ENCODE measurements at regions of chr4 and their contacts with region 1.

Region 1: DNA sequence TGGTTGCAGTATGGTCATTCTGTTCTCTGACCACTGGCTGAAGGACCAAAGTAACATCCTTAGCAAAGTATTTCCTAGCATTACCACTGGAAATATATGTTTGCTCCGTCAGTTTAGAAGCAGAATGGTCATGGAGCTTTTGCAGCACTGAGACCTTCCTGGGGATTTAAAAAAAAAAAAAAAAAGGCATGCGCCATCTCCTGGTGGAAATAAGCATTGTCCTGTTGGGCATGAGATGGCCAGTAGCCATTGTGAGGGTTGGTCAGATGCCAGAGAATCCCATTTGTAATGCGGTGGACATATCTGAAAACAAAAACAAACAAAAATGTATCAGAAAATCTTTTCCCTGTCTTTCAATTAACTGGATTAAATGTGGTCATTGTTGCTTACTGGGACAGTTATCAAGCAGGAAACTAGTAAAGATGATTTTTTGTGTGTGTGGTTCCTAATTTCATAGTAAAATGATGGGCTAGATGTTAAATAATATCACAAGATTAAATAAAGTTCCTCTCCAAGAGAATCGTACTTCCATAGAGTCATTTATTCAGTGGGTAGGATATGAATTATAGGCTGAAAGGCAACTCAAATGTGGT is 139.6 kb downstream of the SOWAHB start:
- DNase-seq: peak in 1 of 2 donors; percentile 35
- ATAC-seq: peak in 7 of 8 donors; percentile 41 to 69 (median 57)
- H3K4me3 ChIP-seq: no peak overlapping the region
- H3K27ac ChIP-seq: peak overlapping the region in 2 of 10 donors; percentile 5 to 60
- H3K4me1 ChIP-seq: peaks cover 0 to 38% (median 20%) of the 10 kb centered on the region in 9 donors
- H3K27me3 ChIP-seq: no peaks in the 10 kb centered on the region
- CTCF ChIP-seq: peak; percentile 55 to 82 (median 77)

Region 2: GRCh38 chr4:76504613-76505465 is 253.5 kb before region 1 on chr4:
- intact Hi-C with region 1: loop called in 8 of 10 experiments (anchors 1 to 10 kb)
- DNase-seq: no peak
- ATAC-seq: peak in 4 of 8 donors; percentile 33 to 63 (median 52)
- H3K4me3 ChIP-seq: no peak overlapping the region
- H3K27ac ChIP-seq: no peak overlapping the region
- H3K4me1 ChIP-seq: no peaks in the 10 kb centered on the region
- H3K27me3 ChIP-seq: peaks cover 0 to 5% (median 0%) of the 10 kb centered on the region in 7 donors
- CTCF ChIP-seq: peak; percentile 32 to 79 (median 71)

Region 3: GRCh38 chr4:76547172-76547742 is 211.1 kb before region 1 on chr4:
- intact Hi-C with region 1: no loop called
- DNase-seq: no peak
- ATAC-seq: no peak
- H3K4me3 ChIP-seq: no peak overlapping the region
- H3K27ac ChIP-seq: peak overlapping the region in 1 of 10 donors; percentile 9
- H3K4me1 ChIP-seq: peaks cover 0 to 13% (median 7%) of the 10 kb centered on the region in 9 donors
- H3K27me3 ChIP-seq: no peaks in the 10 kb centered on the region
- CTCF ChIP-seq: no peak

Region 4: DNA sequence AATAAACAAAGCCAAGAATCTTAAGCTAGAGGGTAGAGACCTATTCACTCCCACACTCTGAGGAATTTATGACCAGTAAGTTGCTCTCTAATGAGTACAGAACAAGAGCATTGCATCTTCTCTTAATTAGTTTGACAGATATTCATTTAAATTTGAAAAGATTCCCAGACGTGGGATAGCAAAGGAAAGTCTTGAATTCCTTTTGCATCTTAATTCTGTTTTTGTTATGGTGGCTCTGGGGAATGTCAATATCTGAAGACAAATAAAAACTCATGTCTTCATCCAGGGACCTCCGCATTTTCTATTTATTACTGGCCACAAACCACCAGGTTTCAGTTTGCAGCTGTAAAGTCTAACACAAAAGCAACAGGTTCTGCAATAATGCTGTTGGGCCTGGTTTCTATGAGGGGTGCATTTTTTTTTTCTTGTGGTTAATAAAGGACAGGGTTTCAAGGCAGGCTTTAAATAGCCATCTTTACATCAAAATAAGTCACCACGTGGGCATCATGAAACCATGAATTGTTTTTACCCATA is 151.1 kb before region 1 on chr4:
- intact Hi-C with region 1: loop called in 1 of 10 experiments (anchors 10 kb)
- DNase-seq: no peak
- ATAC-seq: peak in 1 of 8 donors; percentile 43
- H3K4me3 ChIP-seq: no peak overlapping the region
- H3K27ac ChIP-seq: peak overlapping the region in 1 of 10 donors; percentile 4
- H3K4me1 ChIP-seq: peaks cover 2 to 49% (median 21%) of the 10 kb centered on the region in 9 donors
- H3K27me3 ChIP-seq: no peaks in the 10 kb centered on the region
- CTCF ChIP-seq: no peak

Region 5: GRCh38 chr4:76790377-76790776 is 32.0 kb after region 1 on chr4:
- intact Hi-C with region 1: no loop called
- DNase-seq: no peak
- ATAC-seq: no peak
- H3K4me3 ChIP-seq: no peak overlapping the region
- H3K27ac ChIP-seq: no peak overlapping the region
- H3K4me1 ChIP-seq: no peaks in the 10 kb centered on the region
- H3K27me3 ChIP-seq: no peaks in the 10 kb centered on the region
- CTCF ChIP-seq: no peak

Region 6: GRCh38 chr4:77193511-77194102 is 435.2 kb after region 1 on chr4:
- intact Hi-C with region 1: no loop called
- DNase-seq: peak; percentile 31 to 34
- ATAC-seq: peak in 5 of 8 donors; percentile 39 to 80 (median 64)
- H3K4me3 ChIP-seq: peak overlapping the region in 3 of 10 donors; percentile 19 to 51 (median 23)
- H3K27ac ChIP-seq: peak overlapping the region in 1 of 10 donors; percentile 79
- H3K4me1 ChIP-seq: peaks cover 0 to 14% (median 0%) of the 10 kb centered on the region in 9 donors
- H3K27me3 ChIP-seq: peaks cover 0 to 10% (median 0%) of the 10 kb centered on the region in 7 donors
- CTCF ChIP-seq: no peak

Measured in heart right ventricle (tissue), 16 donors.